IMR-90 (cell line): ENCODE measurements at regions of chr14 and their contacts with region 1.

Region 1: DNA sequence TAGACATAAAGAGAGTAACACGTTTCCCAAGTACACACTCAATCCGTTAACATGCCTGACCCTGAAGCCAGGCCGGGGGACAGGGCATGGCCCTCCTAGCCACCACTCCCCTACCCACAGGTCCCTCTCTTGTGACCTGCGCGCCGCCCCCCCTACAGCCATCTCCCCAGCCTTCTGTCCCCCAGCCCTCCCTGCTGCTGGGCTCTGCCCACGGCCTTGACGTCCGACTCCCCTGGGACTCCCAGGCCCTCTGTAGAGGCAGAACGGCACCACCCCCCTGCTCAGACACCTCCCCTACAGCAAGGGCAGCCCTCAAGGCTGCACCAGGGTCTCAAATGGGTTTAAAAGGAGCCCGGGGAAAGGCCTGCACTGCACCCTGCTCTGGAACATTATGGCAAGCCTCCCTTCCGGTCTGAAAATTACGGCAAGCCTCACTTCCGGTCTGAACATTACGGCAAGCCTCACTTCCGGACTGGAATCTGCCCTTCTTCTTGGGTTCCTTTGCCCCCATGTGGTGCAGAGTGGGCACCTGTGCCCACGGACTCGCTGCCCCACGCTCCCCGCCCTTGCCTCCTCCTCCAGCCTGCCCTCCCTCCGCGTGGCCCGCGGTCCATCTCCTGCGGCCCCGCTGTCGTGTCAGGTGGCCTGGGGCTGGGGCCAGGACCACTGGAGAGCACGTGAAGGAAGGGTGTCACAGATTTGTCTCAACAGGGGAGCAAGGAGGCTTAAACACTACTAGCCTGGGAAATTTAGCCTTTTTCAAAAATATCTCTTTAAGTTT is 77.6 kb downstream of the MOK start:
- DNase-seq: no peak
- ATAC-seq: no peak
- H3K4me3 ChIP-seq: no peak overlapping the region
- H3K27ac ChIP-seq: no peak overlapping the region
- H3K4me1 ChIP-seq: no peaks in the 10 kb centered on the region
- H3K27me3 ChIP-seq: no peaks in the 10 kb centered on the region
- CTCF ChIP-seq: no peak
- POLR2A ChIP-seq: no peak
- RAD21 ChIP-seq: no peak

Region 2: GRCh38 chr14:102187058-102187457 is 40.3 kb before region 1 on chr14:
- CTCF ChIA-PET with region 1: no interaction called
- POLR2A ChIA-PET with region 1: no interaction called
- dilution Hi-C with region 1: no loop called
- in situ Hi-C with region 1: no loop called
- intact Hi-C with region 1: no loop called
- DNase-seq: peak; percentile 87
- ATAC-seq: peak; percentile 87
- H3K4me3 ChIP-seq: no peak overlapping the region
- H3K27ac ChIP-seq: peak overlapping the region; percentile 28; the same call in 1 of the 2 replicates
- H3K4me1 ChIP-seq: peaks cover 13% of the 10 kb centered on the region
- H3K27me3 ChIP-seq: no peaks in the 10 kb centered on the region
- CTCF ChIP-seq: no peak
- POLR2A ChIP-seq: no peak
- RAD21 ChIP-seq: no peak

Region 3: GRCh38 chr14:102262929-102263462 is 35.6 kb after region 1 on chr14:
- CTCF ChIA-PET with region 1: interaction called, 10 read pairs
- POLR2A ChIA-PET with region 1: no interaction called
- dilution Hi-C with region 1: no loop called
- in situ Hi-C with region 1: no loop called
- intact Hi-C with region 1: no loop called
- DNase-seq: peak; percentile 60
- ATAC-seq: peak; percentile 79
- H3K4me3 ChIP-seq: no peak overlapping the region
- H3K27ac ChIP-seq: peak overlapping the region; percentile 53
- H3K4me1 ChIP-seq: peaks cover 8% of the 10 kb centered on the region
- H3K27me3 ChIP-seq: no peaks in the 10 kb centered on the region
- CTCF ChIP-seq: no peak
- POLR2A ChIP-seq: no peak
- RAD21 ChIP-seq: no peak